ENCODE measurements at regions of chr5 and their contacts with region 1.

Region 1: DNA sequence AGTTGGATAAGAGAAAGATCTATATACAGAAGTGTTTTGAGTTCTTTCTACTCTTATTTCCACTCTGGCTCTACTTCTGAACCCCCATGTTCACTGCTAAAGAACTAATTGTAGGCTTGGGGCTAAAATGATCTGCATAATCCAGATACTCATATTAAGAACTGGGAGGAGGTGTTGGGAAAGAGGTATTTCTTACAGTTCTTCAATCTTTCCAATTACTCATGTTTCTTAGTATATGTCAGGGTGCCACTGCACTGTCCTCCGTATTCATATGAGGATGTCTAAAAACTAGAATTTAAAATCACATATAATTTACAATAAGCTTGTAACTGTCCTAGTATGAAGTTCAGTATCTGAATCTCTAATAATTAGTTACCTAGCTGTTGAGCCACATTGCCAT is 12.7 kb downstream of the NIPBL start:
- DNase-seq: no peak
- ATAC-seq: peak; percentile 97
- H3K4me3 Mint-ChIP-seq: no peak overlapping the region
- H3K27ac Mint-ChIP-seq: peak overlapping the region; percentile 67
- H3K4me1 Mint-ChIP-seq: peaks cover 67% of the 10 kb centered on the region
- H3K27me3 Mint-ChIP-seq: no peaks in the 10 kb centered on the region

Region 2: DNA sequence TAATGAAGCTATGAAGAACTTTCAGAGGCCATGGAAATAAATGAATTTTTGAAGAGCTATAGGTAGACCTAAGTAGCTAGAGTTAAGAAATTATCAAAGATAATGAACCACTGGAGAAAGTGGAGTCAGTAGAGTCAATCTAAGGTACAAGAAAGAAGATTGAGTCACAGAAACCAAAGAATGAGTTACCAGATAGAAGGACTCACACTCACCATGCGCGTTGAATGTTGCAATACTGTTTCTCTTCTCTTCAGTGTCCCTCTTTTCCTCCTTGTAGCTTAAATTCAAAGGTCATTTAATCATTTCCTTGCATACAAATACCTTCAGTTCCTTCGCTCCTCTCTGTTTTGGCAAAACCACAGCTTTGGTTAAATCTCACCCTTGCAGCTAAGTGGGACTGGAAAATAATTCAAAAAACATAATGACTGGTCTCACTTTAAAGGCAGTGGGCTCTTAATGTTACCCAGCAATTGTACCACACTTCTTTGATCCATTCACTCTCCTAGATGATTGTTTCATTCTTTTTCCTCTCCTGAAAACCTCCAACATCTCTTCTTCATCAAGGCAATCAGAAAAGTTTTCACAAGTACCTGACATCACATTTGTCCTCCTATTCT is 45.6 kb after region 1 on chr5:
- CTCF ChIA-PET with region 1: interaction called, 3 read pairs
- POLR2A ChIA-PET with region 1: no interaction called
- intact Hi-C with region 1: loop called in 1 of 2 experiments (anchors 2 kb)
- DNase-seq: peak; percentile 27
- ATAC-seq: peak; percentile 95
- H3K4me3 Mint-ChIP-seq: no peak overlapping the region
- H3K27ac Mint-ChIP-seq: peak overlapping the region; percentile 48
- H3K4me1 Mint-ChIP-seq: peaks cover 65% of the 10 kb centered on the region
- H3K27me3 Mint-ChIP-seq: no peaks in the 10 kb centered on the region

Region 3: GRCh38 chr5:36950586-36951457 is 61.6 kb after region 1 on chr5:
- CTCF ChIA-PET with region 1: no interaction called
- POLR2A ChIA-PET with region 1: no interaction called
- intact Hi-C with region 1: no loop called
- DNase-seq: no peak
- ATAC-seq: no peak
- H3K4me3 Mint-ChIP-seq: no peak overlapping the region
- H3K27ac Mint-ChIP-seq: no peak overlapping the region
- H3K4me1 Mint-ChIP-seq: peaks cover 42% of the 10 kb centered on the region
- H3K27me3 Mint-ChIP-seq: no peaks in the 10 kb centered on the region

Region 4: GRCh38 chr5:37554938-37555337 is 665.7 kb after region 1 on chr5:
- CTCF ChIA-PET with region 1: no interaction called
- POLR2A ChIA-PET with region 1: no interaction called
- intact Hi-C with region 1: no loop called
- DNase-seq: peak; percentile 28
- ATAC-seq: no peak
- H3K4me3 Mint-ChIP-seq: no peak overlapping the region
- H3K27ac Mint-ChIP-seq: no peak overlapping the region
- H3K4me1 Mint-ChIP-seq: peaks cover 4% of the 10 kb centered on the region
- H3K27me3 Mint-ChIP-seq: no peaks in the 10 kb centered on the region

Measured in activated CD4-positive, alpha-beta T cell treated with anti-CD3 and anti-CD28 coated beads for 36 hours (primary cell).